ENCODE measurements at regions of chr5 and their contacts with region 1.

Region 1: DNA sequence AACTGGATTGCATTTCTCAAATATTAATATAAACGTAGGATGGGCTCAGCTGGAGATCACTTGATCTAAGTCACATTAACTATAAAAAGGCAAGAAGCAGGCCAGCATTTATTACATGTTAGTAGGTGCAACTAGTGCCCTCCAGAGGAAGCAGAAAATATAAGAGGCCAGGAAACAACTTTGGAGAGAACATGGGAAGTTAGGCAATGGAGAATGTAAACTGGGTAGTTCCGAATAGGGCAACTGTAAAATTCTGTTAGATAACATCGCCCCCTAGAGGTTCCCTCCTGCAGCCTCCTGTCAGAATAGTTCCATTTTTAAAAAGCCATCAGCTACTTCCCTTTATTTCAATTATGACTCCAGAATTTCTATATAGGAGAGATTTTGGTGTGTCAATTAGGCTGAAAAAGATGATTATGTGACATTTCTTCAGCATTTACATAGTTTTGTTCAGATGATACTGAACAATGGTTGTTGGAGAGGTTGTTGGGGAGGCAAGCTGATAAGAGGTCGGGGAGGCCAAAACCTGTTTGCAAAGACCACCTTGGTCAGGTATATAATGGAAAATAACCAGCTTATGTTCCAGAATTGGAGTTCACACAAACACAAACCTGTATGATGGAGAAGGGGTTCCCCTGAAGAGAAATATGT is 22.4 kb downstream of the CCL28 start:
- DNase-seq: peak in 7 of 9 experiments; percentile 11 to 73 (median 43)
- ATAC-seq: peak; percentile 64
- H3K4me3 ChIP-seq: no peak overlapping the region
- H3K4me3 Mint-ChIP-seq: no peak overlapping the region
- H3K27ac ChIP-seq: no peak overlapping the region
- H3K27ac Mint-ChIP-seq: no peak overlapping the region
- H3K4me1 ChIP-seq: no peaks in the 10 kb centered on the region
- H3K4me1 Mint-ChIP-seq: peaks cover 35% of the 10 kb centered on the region
- H3K27me3 ChIP-seq: no peaks in the 10 kb centered on the region
- H3K27me3 Mint-ChIP-seq: no peaks in the 10 kb centered on the region
- CTCF ChIP-seq: peak; percentile 87

Region 2: GRCh38 chr5:43304525-43304924 is 85.3 kb before region 1 on chr5:
- CTCF ChIA-PET with region 1: no interaction called
- POLR2A ChIA-PET with region 1: no interaction called
- intact Hi-C with region 1: no loop called
- DNase-seq: no peak
- ATAC-seq: no peak
- H3K4me3 ChIP-seq: no peak overlapping the region
- H3K4me3 Mint-ChIP-seq: no peak overlapping the region
- H3K27ac ChIP-seq: no peak overlapping the region
- H3K27ac Mint-ChIP-seq: no peak overlapping the region
- H3K4me1 ChIP-seq: peaks cover 4% of the 10 kb centered on the region
- H3K4me1 Mint-ChIP-seq: peaks cover 47% of the 10 kb centered on the region
- H3K27me3 ChIP-seq: no peaks in the 10 kb centered on the region
- H3K27me3 Mint-ChIP-seq: no peaks in the 10 kb centered on the region
- CTCF ChIP-seq: no peak

Region 3: DNA sequence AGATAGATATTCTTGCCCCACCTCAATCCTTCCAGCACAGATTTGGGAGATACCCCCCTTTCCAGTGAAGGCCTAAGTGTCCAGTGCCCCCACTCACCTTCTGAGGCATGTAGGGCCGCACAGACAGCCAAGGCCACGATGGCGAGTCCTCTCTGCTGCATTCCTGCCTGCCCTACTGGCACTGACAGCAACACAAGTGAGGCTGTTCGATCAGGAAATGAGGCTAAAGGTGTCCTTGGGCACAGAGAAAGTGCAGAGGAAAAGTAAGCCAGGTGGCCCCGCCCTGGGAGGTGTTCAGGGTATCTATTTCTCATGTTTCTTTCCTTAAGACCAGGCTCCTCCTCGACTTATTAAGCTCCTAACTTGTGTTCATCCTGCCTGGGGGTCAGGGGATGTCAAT is 22.4 kb after region 1 on chr5 and contains the start of gene CCL28:
- CTCF ChIA-PET with region 1: interaction called, 13 read pairs
- POLR2A ChIA-PET with region 1: no interaction called
- intact Hi-C with region 1: no loop called
- DNase-seq: no peak
- ATAC-seq: no peak
- H3K4me3 ChIP-seq: no peak within 1 kb of the TSS
- H3K4me3 Mint-ChIP-seq: no peak within 1 kb of the TSS
- H3K27ac ChIP-seq: no peak within 1 kb of the TSS
- H3K27ac Mint-ChIP-seq: no peak within 1 kb of the TSS
- H3K4me1 ChIP-seq: no peaks in the 10 kb centered on the region
- H3K4me1 Mint-ChIP-seq: no peaks in the 10 kb centered on the region
- H3K27me3 ChIP-seq: no peaks in the 10 kb centered on the region
- H3K27me3 Mint-ChIP-seq: peaks cover 3% of the 10 kb centered on the region
- CTCF ChIP-seq: no peak
- total RNA-seq, gene CCL28: 19.5 to 20.9 TPM

Region 4: GRCh38 chr5:43609752-43610151 is 219.9 kb after region 1 on chr5:
- CTCF ChIA-PET with region 1: no interaction called
- POLR2A ChIA-PET with region 1: no interaction called
- intact Hi-C with region 1: loop called (anchors 5 kb)
- DNase-seq: peak in 2 of 9 experiments; percentile 30 to 46
- ATAC-seq: peak; percentile 74
- H3K4me3 ChIP-seq: no peak overlapping the region
- H3K4me3 Mint-ChIP-seq: no peak overlapping the region
- H3K27ac ChIP-seq: no peak overlapping the region
- H3K27ac Mint-ChIP-seq: no peak overlapping the region
- H3K4me1 ChIP-seq: no peaks in the 10 kb centered on the region
- H3K4me1 Mint-ChIP-seq: peaks cover 45% of the 10 kb centered on the region
- H3K27me3 ChIP-seq: no peaks in the 10 kb centered on the region
- H3K27me3 Mint-ChIP-seq: no peaks in the 10 kb centered on the region
- CTCF ChIP-seq: no peak

Measured in CD8-positive, alpha-beta T cell (primary cell).